Activated CD4-positive, alpha-beta T cell treated with anti-CD3 and anti-CD28 coated beads for 36 hours (primary cell): ENCODE measurements at regions of chr17 and their contacts with region 1.

Region 1: DNA sequence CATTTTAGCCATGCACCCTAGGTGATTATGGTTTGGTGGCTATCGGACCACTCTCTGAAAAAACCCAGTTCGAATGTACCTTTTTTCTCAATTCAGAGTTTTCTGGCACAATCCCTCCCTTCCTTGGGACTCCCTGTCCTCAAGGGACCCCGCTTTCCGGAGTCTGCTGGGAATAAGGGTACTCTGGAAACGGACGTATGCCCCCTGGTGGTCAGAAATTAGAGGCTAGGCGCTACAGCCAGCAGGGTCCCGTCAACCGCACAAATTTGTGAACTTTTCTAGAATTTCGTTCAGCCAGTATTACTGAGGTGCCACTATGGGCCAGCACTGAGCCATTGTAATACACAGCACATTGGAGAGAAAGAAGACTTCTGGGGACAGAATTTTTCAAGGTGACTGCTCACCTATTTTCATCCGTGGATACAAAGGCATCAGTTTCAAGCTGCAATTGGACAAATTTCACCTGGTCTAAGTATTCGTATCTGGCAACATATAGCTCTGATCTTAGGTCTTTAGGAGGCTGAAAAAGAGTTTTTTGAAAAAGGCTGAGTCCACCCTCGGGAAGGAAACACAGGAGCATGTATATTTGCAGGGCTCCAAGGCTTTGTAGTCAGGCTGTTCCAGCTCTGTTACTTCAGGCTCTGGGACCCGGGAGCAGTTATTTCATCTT is 27.1 kb upstream of the CRYBA1 start:
- DNase-seq: peak; percentile 85
- ATAC-seq: peak; percentile 97
- H3K4me3 Mint-ChIP-seq: peak overlapping the region; percentile 17
- H3K27ac Mint-ChIP-seq: no peak overlapping the region
- H3K4me1 Mint-ChIP-seq: peaks cover 6% of the 10 kb centered on the region
- H3K27me3 Mint-ChIP-seq: no peaks in the 10 kb centered on the region

Region 2: DNA sequence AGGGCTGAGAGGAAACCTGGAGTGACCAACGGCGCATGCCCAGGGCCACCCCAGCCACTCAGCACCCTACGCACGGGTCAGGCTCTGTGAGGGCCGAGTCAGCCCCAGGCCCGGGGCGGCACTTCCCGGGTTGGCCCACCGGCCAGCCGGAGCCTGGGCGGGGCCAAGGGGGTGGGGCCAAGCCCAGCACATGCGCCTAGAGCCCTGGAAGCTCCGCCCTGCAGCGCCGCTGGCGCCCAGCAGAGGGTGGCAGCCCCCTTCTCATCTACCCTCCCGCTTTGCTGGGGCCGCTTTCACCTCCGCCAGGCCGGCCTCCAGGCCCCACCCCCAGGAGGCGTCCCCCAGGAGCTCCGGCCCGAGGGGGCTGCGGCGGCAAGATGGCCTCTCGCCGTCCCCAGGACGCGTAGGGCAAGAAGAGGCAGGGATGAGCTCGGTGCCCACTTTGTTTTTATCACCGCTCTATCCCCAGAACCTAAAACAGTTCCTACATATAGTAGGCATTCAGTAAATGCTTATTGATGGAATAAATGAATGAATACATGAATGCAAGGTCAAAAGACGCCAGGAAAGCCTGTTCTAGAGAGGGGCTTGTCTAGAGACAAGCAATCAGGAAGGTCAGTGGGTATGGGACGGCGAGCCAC is 70.6 kb before region 1 on chr17:
- CTCF ChIA-PET with region 1: interaction called, 136 read pairs
- POLR2A ChIA-PET with region 1: no interaction called
- intact Hi-C with region 1: loop called (anchors 1 kb)
- DNase-seq: peak; percentile 96
- ATAC-seq: peak; percentile 93
- H3K4me3 Mint-ChIP-seq: peak overlapping the region; percentile 56
- H3K27ac Mint-ChIP-seq: peak overlapping the region; percentile 90
- H3K4me1 Mint-ChIP-seq: peaks cover 48% of the 10 kb centered on the region
- H3K27me3 Mint-ChIP-seq: no peaks in the 10 kb centered on the region

Region 3: DNA sequence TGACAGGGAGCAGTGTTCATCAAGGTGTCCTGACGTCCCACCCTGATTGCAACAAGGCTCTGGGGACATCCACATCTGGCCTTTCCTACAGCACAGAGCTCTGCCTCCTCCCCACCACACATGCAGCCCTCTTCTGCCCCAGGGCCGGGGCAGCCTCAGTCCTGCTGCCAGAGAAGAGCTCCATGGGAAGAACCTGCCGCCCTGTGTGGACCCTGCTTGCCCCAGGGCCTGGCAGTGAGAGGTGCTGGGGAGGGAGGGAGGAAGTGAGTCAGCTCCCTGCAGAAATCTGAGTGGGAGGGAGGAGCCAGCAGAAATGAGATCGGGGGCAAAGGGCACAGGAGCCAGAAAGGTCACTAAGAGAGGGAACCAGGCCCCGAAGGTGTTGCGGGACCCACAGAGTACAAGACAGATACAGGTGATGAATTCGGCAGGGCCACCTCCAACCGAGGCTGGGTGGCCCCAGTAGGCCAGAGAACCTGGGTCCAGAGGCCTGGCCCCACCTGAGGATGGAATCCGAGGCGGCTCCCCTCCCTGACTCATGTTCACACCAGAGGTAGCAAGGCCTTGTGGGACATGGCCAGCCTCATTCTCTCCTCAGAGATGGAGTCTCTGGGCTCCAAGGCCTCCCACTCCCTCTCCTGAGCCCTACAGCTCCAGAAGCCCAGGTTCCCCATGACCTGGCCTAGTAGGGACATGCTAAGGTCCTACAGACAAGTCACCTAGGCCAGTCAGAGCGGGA is 64.1 kb before region 1 on chr17:
- CTCF ChIA-PET with region 1: interaction called, 136 read pairs
- POLR2A ChIA-PET with region 1: no interaction called
- intact Hi-C with region 1: loop called in 1 of 2 experiments (anchors 1 kb)
- DNase-seq: peak; percentile 86
- ATAC-seq: peak; percentile 97
- H3K4me3 Mint-ChIP-seq: peak overlapping the region; percentile 45
- H3K27ac Mint-ChIP-seq: peak overlapping the region; percentile 83
- H3K4me1 Mint-ChIP-seq: peaks cover 32% of the 10 kb centered on the region
- H3K27me3 Mint-ChIP-seq: no peaks in the 10 kb centered on the region

Region 4: DNA sequence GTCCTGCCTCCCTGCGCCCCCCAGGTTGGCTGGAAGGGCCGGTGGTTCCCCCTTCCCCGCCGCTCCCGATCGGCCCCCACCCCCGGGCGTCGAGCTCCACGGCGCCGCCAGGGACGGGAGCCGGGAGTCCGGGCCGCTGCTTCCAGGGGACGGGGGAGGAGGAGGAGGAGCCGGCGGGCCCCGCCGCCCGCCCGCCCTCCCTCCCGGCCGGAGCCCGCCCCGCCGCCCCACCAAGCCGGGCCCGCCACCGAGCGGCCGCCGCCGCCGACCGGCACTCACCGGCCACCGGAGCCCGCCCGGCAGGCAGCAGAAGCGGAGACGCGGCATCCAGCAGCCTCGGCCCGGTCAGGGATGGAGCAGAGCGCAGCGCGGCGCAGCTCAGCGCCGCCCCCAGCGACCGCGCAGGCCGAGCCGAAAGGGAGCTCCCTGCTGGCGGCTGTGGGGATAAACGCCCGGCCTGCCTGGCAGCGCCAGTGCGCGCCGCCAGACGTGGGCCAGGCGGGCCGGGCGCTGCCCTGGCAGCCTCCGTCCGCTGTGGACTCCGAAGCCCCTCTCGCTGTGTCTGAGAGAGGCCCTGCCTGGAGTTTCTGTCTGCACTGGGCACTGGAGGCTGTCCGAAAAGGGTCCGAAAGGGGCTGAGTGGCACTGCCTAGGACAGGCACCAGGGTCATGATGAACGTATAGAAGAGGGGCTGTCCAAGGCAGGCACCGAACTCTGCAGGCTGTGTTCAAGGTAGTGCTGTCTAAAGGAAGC is 39.3 kb before region 1 on chr17 and contains the start of gene MYO18A:
- CTCF ChIA-PET with region 1: interaction called, 16 read pairs
- POLR2A ChIA-PET with region 1: no interaction called
- intact Hi-C with region 1: loop called in 1 of 2 experiments (anchors 2 kb)
- DNase-seq: peak; percentile 90
- ATAC-seq: peak; percentile 93
- H3K4me3 Mint-ChIP-seq: peak within 1 kb of the TSS; percentile 23
- H3K27ac Mint-ChIP-seq: no peak within 1 kb of the TSS
- H3K4me1 Mint-ChIP-seq: peaks cover 28% of the 10 kb centered on the region
- H3K27me3 Mint-ChIP-seq: no peaks in the 10 kb centered on the region
- total RNA-seq, gene MYO18A: 31.9 to 38.2 TPM

Region 5: DNA sequence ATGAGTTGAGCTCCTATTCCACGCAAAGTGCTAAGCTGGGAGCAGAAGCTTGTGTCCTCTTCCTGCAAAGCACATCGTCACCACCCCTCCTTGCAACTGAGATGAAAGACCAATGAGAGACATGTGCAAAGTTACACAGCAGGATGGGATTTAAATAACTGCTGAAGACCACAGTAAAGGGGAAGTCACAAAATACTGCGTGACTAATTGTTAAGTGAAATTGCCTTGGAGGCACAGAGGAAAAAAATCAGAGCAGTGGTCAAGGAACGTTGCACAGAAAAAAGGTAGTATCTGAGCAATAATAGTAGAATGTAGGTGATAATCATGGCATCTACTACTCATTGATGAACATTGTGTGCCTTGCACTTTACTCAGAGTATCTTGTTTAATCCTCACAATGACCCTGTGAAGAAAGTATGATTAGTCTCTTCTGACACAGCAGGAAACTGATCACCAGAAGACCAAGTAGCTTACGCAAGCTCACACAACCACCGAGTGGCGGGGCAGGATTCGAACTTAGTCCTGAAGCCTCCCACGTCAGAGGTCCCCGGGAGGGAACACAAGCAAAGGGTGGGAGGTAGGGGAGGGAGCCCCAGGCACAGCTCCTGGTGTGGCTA is 23.9 kb before region 1 on chr17:
- CTCF ChIA-PET with region 1: interaction called, 15 read pairs
- POLR2A ChIA-PET with region 1: no interaction called
- intact Hi-C with region 1: no loop called
- DNase-seq: no peak
- ATAC-seq: peak; percentile 39
- H3K4me3 Mint-ChIP-seq: no peak overlapping the region
- H3K27ac Mint-ChIP-seq: no peak overlapping the region
- H3K4me1 Mint-ChIP-seq: peaks cover 2% of the 10 kb centered on the region
- H3K27me3 Mint-ChIP-seq: peaks cover 8% of the 10 kb centered on the region

Region 6: GRCh38 chr17:29209073-29209472 is 10.4 kb before region 1 on chr17:
- CTCF ChIA-PET with region 1: interaction called, 17 read pairs
- POLR2A ChIA-PET with region 1: no interaction called
- intact Hi-C with region 1: no loop called
- DNase-seq: no peak
- ATAC-seq: no peak
- H3K4me3 Mint-ChIP-seq: no peak overlapping the region
- H3K27ac Mint-ChIP-seq: no peak overlapping the region
- H3K4me1 Mint-ChIP-seq: no peaks in the 10 kb centered on the region
- H3K27me3 Mint-ChIP-seq: peaks cover 4% of the 10 kb centered on the region

Region 7: GRCh38 chr17:29533976-29534375 is 314.5 kb after region 1 on chr17:
- CTCF ChIA-PET with region 1: no interaction called
- POLR2A ChIA-PET with region 1: no interaction called
- intact Hi-C with region 1: no loop called
- DNase-seq: no peak
- ATAC-seq: no peak
- H3K4me3 Mint-ChIP-seq: no peak overlapping the region
- H3K27ac Mint-ChIP-seq: no peak overlapping the region
- H3K4me1 Mint-ChIP-seq: no peaks in the 10 kb centered on the region
- H3K27me3 Mint-ChIP-seq: no peaks in the 10 kb centered on the region